HepG2 (cell line): ENCODE measurements at regions of chr18 and their contacts with region 1.

Region 1: GRCh38 chr18:26771524-26771923 is 94.0 kb downstream of the AQP4 start:
- DNase-seq: peak; percentile 6
- ATAC-seq: peak; percentile 78
- H3K4me3 ChIP-seq: no peak overlapping the region
- H3K27ac ChIP-seq: no peak overlapping the region
- H3K4me1 ChIP-seq: no peaks in the 10 kb centered on the region
- H3K27me3 ChIP-seq: no peaks in the 10 kb centered on the region
- CTCF ChIP-seq: peak; percentile 56
- EP300 ChIP-seq: no peak
- POLR2A ChIP-seq: no peak
- RAD21 ChIP-seq: 0 out of 2 replicates have a peak, but pooled peaks have one; percentile 38

Region 2: DNA sequence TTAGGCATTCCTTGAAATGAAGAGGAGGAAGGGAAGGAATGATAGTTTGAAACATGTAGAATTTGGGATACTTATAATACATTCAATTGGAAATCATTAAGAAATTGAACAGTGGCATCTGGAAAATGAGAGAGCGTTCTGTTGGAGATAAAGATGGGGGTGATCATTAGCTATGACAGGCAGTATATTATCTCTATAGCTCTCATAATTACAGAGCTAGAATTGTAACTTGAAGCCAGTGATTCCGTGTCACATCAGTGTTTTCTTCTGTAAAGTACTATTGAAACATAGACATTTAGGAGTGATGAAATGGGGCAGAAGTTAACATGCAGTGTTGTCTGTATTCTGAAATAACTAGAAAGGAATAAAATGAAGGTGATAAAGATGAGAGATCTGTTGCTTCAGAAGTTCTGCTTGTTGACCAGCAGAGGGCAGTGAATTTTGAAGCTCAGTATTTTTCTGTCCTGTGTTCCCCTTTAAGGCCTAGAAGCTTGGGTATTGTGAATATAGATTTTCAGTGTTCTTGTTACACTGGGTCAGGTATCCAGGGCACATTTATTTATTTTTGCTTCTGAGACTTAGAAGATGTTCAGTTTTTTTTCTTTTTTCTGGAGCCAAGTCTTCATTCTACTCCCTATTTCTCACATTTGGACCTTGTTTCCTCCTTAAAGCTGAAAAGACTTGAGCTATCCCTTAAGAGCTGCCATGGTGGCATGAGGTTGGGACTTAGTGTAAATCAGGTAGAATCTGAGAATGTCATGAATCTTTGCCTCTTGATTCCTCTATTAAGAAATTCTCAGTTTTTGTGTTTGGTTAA is 387.9 kb before region 1 on chr18:
- CTCF ChIA-PET with region 1: interaction called, 4 read pairs
- POLR2A ChIA-PET with region 1: no interaction called
- in situ Hi-C with region 1: no loop called
- intact Hi-C with region 1: loop called (anchors 2 kb)
- DNase-seq: peak; percentile 35
- ATAC-seq: peak; percentile 75
- H3K4me3 ChIP-seq: no peak overlapping the region
- H3K27ac ChIP-seq: no peak overlapping the region
- H3K4me1 ChIP-seq: peaks cover 15% of the 10 kb centered on the region
- H3K27me3 ChIP-seq: no peaks in the 10 kb centered on the region
- CTCF ChIP-seq: peak; percentile 63
- EP300 ChIP-seq: no peak
- POLR2A ChIP-seq: no peak
- RAD21 ChIP-seq: peak; percentile 31; the same call in 1 of the 2 replicates

Region 3: GRCh38 chr18:26405190-26405801 is 366.2 kb before region 1 on chr18:
- CTCF ChIA-PET with region 1: no interaction called
- POLR2A ChIA-PET with region 1: no interaction called
- in situ Hi-C with region 1: no loop called
- intact Hi-C with region 1: loop called (anchors 5 kb)
- DNase-seq: peak; percentile 30
- ATAC-seq: peak; percentile 95
- H3K4me3 ChIP-seq: no peak overlapping the region
- H3K27ac ChIP-seq: no peak overlapping the region
- H3K4me1 ChIP-seq: no peaks in the 10 kb centered on the region
- H3K27me3 ChIP-seq: peaks cover 3 to 38% of the 10 kb centered on the region in 2 experiments; a peak in 3 of 5 replicates
- CTCF ChIP-seq: peak; percentile 80
- EP300 ChIP-seq: no peak
- POLR2A ChIP-seq: no peak
- RAD21 ChIP-seq: peak; percentile 73

Region 4: GRCh38 chr18:26621161-26622026 is 150.1 kb before region 1 on chr18:
- CTCF ChIA-PET with region 1: no interaction called
- POLR2A ChIA-PET with region 1: no interaction called
- in situ Hi-C with region 1: no loop called
- intact Hi-C with region 1: loop called (anchors 1 kb)
- DNase-seq: peak; percentile 21
- ATAC-seq: peak; percentile 95
- H3K4me3 ChIP-seq: peak overlapping the region in 2 of 3 experiments; percentile 35 to 56; a peak in 4 of 6 replicates
- H3K27ac ChIP-seq: no peak overlapping the region
- H3K4me1 ChIP-seq: no peaks in the 10 kb centered on the region
- H3K27me3 ChIP-seq: no peaks in the 10 kb centered on the region
- CTCF ChIP-seq: peak; percentile 80
- EP300 ChIP-seq: no peak
- POLR2A ChIP-seq: no peak
- RAD21 ChIP-seq: peak; percentile 46; the same call in 1 of the 2 replicates

Region 5: DNA sequence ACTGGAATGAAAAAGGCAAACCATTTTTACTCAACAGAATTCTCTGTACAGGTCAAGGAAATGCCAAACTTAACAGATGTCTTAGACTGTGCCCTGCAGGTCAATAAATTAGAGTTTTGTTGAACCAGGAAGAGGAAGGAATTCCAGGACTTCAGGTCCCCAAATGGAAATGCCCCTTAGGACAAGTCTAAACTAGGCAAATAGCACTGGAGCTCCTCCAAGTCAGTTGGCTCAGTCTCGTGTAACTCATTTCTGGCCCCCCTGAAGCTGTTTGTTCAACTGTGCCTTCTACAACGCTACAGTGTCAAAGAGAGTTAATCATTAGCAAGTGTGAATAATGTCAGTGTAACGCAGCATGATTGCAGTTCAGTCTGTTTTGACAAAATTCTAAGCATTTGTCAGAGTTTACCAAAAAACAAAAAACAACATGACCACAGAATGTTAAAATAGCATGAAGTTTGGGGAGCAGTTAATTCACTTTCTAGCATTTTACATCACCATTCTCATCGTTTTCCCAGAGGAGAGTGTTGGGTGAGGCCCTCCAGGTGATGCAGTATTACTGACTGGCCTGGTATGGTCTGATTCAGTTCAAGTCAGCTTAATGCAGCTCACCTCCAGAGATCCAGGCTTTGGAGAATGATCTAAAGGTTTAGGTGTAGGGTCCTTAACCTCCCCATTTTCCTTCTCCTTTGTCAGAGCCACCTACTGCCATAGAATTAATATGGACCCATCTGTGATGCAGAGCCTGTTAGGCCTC is 14.1 kb before region 1 on chr18:
- CTCF ChIA-PET with region 1: no interaction called
- POLR2A ChIA-PET with region 1: no interaction called
- in situ Hi-C with region 1: no loop called
- intact Hi-C with region 1: no loop called
- DNase-seq: no peak
- ATAC-seq: peak; percentile 88
- H3K4me3 ChIP-seq: no peak overlapping the region; a peak in 1 of 6 replicates
- H3K27ac ChIP-seq: no peak overlapping the region
- H3K4me1 ChIP-seq: peaks cover 47% of the 10 kb centered on the region
- H3K27me3 ChIP-seq: 0 out of 5 replicates have a peak, but pooled peaks cover 0 to 2% of the 10 kb centered on the region in 2 experiments
- CTCF ChIP-seq: no peak
- EP300 ChIP-seq: no peak
- POLR2A ChIP-seq: no peak
- RAD21 ChIP-seq: no peak